GM10248 (cell line): ENCODE measurements at regions of chr16 and their contacts with region 1.

Region 1: DNA sequence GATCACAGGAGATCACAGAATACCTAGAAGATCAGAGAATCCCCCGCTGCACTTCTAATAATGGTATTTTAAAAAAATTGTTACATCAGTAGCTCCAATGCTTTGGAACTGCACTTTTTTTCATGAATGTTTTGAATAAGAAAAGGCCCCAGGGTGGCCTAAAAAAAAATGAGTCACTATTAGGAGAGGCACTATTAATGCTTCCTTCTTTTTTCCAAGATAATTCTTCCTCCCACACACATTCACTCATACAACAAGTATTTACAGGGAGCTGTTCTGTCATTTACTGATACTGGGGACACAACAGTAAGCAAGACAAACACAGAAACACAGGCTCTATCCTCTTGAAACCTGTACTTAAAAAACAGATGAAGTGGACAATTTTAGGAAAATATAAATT is 675 bp upstream of the PDZD9 start:
- DNase-seq: no peak
- CTCF ChIP-seq: no peak

Region 2: DNA sequence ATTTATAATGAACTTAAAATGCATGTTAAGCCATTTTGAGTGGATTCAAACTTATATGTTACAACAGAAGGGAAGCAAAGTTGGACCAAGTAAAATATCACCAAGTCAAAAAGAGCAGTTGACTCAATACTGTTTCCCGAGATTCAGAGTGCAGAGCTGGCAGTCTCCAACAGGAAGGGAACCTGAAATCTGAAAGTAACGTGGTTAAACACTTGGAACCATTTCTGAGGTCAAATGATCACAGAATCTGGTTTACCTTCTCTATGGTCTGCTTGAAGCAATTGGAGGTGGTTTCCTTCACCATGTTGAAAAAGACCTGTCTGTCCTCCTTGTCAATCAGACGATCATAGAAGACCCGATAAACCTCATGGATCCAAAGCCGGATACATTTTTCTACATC is 1014.5 kb before region 1 on chr16:
- CTCF ChIA-PET with region 1: no interaction called
- POLR2A ChIA-PET with region 1: no interaction called
- DNase-seq: no peak
- CTCF ChIP-seq: no peak

Region 3: DNA sequence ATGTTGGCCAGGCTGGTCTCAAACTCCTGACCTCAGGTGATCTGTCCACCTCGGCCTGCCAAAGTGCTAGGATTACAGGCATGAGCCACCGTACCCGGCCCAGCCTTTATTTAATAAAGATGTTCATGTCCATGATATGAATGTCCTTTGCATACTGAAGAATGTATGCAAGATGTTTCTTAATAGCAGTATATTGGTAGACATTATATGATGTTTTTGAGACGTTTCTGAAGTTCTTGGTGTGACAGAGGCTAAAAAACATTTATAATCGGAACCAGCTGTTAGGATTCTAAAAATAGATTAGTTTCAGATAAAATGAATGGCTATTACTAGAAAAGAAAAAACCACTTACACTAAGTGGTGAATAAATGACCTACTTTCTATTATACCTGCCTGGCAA is 12.5 kb before region 1 on chr16:
- CTCF ChIA-PET with region 1: interaction called, 26 read pairs
- POLR2A ChIA-PET with region 1: no interaction called
- DNase-seq: no peak
- CTCF ChIP-seq: no peak

Region 4: GRCh38 chr16:22014271-22014873 is 12.8 kb after region 1 on chr16:
- CTCF ChIA-PET with region 1: interaction called, 10 read pairs
- POLR2A ChIA-PET with region 1: no interaction called
- DNase-seq: peak; percentile 35
- CTCF ChIP-seq: no peak

Region 5: DNA sequence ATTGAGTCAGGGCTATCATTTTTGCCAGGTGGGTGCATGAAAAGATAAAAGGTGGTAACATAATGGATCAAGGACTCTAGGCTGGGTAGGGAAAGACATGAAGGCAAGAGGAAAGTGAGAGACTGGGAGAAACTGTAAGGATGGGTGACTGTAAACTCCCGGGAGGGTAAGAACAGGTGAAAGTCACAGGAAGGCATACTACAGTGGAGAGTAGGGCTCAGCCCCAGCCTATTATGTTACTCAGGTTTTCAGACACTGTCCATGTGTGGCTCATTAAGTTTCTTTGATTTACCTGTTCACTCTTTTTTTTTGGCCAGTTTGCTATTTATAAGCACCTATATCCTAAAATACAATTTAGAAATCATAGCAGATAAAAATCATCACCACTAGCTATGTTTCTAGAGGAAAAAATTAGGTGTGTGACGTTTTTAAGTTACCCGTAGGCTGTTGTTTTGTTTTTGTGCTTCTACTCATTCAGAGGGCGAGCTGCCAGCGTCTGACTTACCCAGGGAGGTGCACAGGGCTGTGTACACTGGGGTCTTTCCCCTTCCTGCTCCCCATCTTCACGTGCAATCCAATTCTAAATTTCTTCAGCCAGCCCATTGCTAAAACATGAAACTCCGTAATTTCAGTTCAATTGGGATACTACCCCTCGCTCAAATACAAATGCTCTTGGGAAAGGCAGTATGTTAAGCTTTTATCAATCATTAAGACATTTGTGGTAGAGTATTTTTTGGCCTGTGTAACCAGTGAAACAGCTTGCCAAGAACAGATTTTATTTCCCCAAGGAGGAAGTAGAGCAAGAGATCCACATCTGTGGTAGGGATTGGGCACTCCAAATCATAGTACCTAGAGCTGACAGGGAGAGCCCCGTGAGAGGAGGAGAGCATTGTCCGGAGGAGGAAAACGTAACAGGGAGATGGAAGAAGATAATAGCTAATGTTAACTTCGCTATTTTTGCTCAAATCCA is 69.1 kb after region 1 on chr16:
- CTCF ChIA-PET with region 1: interaction called, 313 read pairs
- POLR2A ChIA-PET with region 1: no interaction called
- DNase-seq: no peak
- CTCF ChIP-seq: no peak

Region 6: GRCh38 chr16:22098405-22099255 is 97.0 kb after region 1 on chr16:
- CTCF ChIA-PET with region 1: interaction called, 26 read pairs
- POLR2A ChIA-PET with region 1: no interaction called
- DNase-seq: peak; percentile 71
- CTCF ChIP-seq: peak; percentile 61